Activated B cell treated with CpG ODN at 0.5 μM for 24 hours (primary cell): ENCODE measurements at regions of chr10 and their contacts with region 1.

Region 1: GRCh38 chr10:48656241-48656913 is 28.3 kb upstream of the WDFY4 start:
- DNase-seq: peak; percentile 99
- ATAC-seq: peak; percentile 93
- H3K4me3 Mint-ChIP-seq: peak overlapping the region; percentile 81
- H3K27ac Mint-ChIP-seq: no peak overlapping the region
- H3K4me1 Mint-ChIP-seq: peaks cover 48% of the 10 kb centered on the region
- H3K27me3 Mint-ChIP-seq: peaks cover 6% of the 10 kb centered on the region
- CTCF ChIP-seq: peak; percentile 97

Region 2: DNA sequence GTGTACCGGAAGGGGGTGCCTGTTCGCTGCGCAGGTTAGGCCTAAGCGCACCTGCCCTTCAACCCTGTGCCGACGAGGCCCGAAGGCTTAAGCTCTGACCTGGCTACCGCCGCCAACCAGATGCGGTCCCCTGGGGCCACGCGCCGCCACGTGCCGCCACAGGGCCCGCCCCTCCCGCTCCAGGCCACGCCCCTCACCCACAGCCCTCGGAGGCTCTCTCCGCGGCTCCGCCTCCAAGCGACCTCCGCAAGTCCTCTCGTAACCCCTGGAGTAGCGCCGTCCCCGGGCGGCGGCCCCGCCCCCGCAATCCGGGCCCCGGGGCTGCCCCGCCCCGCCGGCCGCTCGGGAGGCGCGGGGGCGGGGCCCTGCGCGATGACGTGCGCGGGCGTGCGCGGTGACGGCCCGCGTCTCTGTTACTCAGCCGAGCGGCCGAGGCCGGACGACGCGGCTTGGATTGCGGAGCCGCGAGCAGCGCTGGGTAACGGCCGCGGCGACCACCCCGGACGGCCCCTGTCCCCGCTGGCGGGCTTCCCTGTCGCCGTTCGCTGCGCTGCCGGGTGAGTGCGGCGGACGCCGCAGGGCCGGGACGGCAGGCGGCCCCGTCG is 350.0 kb before region 1 on chr10 and contains the start of gene MAPK8:
- CTCF ChIA-PET with region 1: no interaction called
- POLR2A ChIA-PET with region 1: no interaction called
- intact Hi-C with region 1: loop called (anchors 5 kb)
- DNase-seq: peak; percentile 93
- ATAC-seq: peak; percentile 92
- H3K4me3 Mint-ChIP-seq: peak within 1 kb of the TSS; percentile 78
- H3K27ac Mint-ChIP-seq: peak within 1 kb of the TSS; percentile 47
- H3K4me1 Mint-ChIP-seq: peaks cover 33% of the 10 kb centered on the region
- H3K27me3 Mint-ChIP-seq: no peaks in the 10 kb centered on the region
- CTCF ChIP-seq: no peak
- total RNA-seq, gene MAPK8: 25.8 and 25.9 TPM in 2 replicates

Region 3: DNA sequence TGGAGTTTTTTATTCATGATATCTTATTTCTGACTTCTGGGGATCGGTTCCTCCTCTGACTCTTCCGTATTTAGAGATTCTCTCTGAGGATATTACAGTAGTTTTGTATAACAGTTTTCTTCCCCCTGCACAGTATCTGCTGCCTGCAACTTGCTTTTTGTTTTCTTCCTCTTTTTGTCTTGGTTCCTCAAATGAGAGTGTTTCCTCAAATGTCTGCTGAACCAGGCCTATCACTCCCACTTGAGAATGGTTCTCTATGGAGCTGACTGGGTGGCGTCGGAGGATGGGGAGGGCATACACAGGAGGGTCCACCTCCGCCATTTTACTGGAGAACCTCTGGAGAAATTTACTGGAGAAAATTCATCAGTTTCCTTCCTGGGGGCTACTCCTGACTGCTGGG is 79.2 kb before region 1 on chr10:
- CTCF ChIA-PET with region 1: interaction called, 33 read pairs
- POLR2A ChIA-PET with region 1: interaction called, 4 read pairs
- intact Hi-C with region 1: loop called (anchors 1 kb)
- DNase-seq: no peak
- ATAC-seq: peak; percentile 65
- H3K4me3 Mint-ChIP-seq: peak overlapping the region; percentile 41
- H3K27ac Mint-ChIP-seq: peak overlapping the region; percentile 82
- H3K4me1 Mint-ChIP-seq: peaks cover 92% of the 10 kb centered on the region
- H3K27me3 Mint-ChIP-seq: no peaks in the 10 kb centered on the region
- CTCF ChIP-seq: no peak

Region 4: GRCh38 chr10:48670978-48671913 is 14.9 kb after region 1 on chr10:
- CTCF ChIA-PET with region 1: interaction called, 26 read pairs
- POLR2A ChIA-PET with region 1: interaction called, 20 read pairs
- intact Hi-C with region 1: loop called (anchors 1 kb)
- DNase-seq: peak; percentile 88
- ATAC-seq: peak; percentile 68
- H3K4me3 Mint-ChIP-seq: peak overlapping the region; percentile 74
- H3K27ac Mint-ChIP-seq: peak overlapping the region; percentile 98
- H3K4me1 Mint-ChIP-seq: peaks cover 76% of the 10 kb centered on the region
- H3K27me3 Mint-ChIP-seq: no peaks in the 10 kb centered on the region
- CTCF ChIP-seq: no peak

Region 5: GRCh38 chr10:48714088-48714487 is 57.7 kb after region 1 on chr10:
- CTCF ChIA-PET with region 1: interaction called, 26 read pairs
- POLR2A ChIA-PET with region 1: interaction called, 5 read pairs
- intact Hi-C with region 1: no loop called
- DNase-seq: no peak
- ATAC-seq: no peak
- H3K4me3 Mint-ChIP-seq: no peak overlapping the region
- H3K27ac Mint-ChIP-seq: no peak overlapping the region
- H3K4me1 Mint-ChIP-seq: peaks cover 66% of the 10 kb centered on the region
- H3K27me3 Mint-ChIP-seq: no peaks in the 10 kb centered on the region
- CTCF ChIP-seq: no peak

Region 6: GRCh38 chr10:48765039-48765438 is 108.7 kb after region 1 on chr10:
- CTCF ChIA-PET with region 1: interaction called, 35 read pairs
- POLR2A ChIA-PET with region 1: no interaction called
- intact Hi-C with region 1: loop called (anchors 2 kb)
- DNase-seq: no peak
- ATAC-seq: peak; percentile 18
- H3K4me3 Mint-ChIP-seq: no peak overlapping the region
- H3K27ac Mint-ChIP-seq: no peak overlapping the region
- H3K4me1 Mint-ChIP-seq: peaks cover 29% of the 10 kb centered on the region
- H3K27me3 Mint-ChIP-seq: no peaks in the 10 kb centered on the region
- CTCF ChIP-seq: no peak